ENCODE measurements at regions of chr1 and their contacts with region 1.

Region 1: GRCh38 chr1:205791568-205792180 is 16.4 kb upstream of the RAB29 start:
- DNase-seq: peak in 2 of 3 donors; percentile 72 to 85
- ATAC-seq: peak; percentile 89
- H3K4me3 ChIP-seq: no peak overlapping the region
- H3K4me1 ChIP-seq: no peaks in the 10 kb centered on the region
- CTCF ChIP-seq: peak; percentile 63

Region 2: DNA sequence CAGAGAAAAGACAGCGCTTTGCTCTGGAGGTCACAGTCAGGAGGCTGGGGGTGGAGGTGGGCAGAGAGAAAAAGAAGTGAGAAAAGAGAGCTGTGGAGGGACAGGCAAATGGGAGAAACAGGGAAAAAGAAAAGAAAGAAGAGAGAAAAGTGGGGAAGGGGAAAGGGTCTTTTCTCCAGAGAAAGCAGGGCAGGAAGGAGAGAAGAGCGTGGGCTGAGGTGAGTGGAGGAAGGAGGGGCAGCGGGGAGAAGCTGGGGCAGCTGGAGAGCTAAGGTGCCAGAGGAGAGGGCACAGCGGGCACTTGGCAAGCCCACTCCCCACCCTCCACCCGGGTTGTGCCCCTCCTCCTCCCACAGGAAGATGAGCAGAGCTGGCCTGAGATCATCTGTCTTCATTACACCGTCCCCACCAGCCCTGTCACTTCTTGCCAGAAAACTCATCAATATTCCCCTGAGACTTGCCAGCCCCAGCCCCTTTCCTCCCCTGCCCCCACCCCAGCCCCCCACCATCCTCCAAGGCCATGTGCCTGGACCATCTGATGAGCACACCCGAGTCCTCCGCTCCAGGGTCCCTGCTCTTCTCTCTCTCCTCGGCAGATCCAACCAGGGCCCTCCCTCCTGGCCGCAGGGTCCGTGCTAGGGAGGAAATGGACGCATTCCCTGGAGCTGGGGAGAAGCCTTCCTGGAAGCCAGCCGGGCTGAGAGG is 318.8 kb before region 1 on chr1:
- intact Hi-C with region 1: no loop called
- DNase-seq: no peak
- ATAC-seq: no peak
- H3K4me3 ChIP-seq: no peak overlapping the region
- H3K4me1 ChIP-seq: peaks cover 2% of the 10 kb centered on the region
- CTCF ChIP-seq: no peak

Region 3: DNA sequence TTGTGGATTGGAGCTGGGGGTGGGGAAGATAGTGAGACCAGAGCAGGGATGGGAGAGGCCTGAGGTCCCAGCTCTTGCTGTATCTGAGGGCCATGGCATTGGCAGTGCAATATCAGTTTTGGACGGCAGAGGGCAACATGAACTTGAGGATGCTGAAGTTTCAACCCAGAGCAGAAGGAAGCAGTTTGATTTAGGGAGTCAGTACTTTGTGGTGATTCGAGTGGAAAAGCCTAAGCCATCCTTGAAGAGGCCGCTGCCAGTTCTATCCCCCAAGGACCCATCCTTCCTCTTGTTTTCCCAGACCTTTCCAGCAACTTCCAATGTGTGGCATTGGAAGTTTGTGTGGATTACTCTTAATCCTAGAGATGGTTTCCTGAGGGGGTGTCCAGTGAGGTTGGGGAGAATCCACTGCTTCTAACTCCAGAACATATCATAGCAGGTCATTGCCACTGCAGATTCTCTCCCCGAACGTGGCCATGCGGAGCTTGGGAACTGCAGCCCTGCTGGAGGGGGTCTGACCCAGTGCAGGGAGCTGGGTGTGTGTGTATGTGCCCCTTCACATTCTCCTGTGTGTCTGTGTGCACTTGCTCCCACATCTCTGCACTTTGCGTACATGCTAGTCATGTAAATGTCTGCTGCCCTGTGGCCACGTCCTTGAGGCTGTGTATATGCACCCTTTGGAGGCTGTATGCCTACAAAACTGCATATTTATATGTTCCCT is 127.5 kb after region 1 on chr1:
- intact Hi-C with region 1: loop called in 1 of 2 experiments (anchors 10 kb)
- DNase-seq: peak in 2 of 3 donors; percentile 75 to 87
- ATAC-seq: peak; percentile 79
- H3K4me3 ChIP-seq: no peak overlapping the region
- H3K4me1 ChIP-seq: no peaks in the 10 kb centered on the region
- CTCF ChIP-seq: peak; percentile 82

Region 4: DNA sequence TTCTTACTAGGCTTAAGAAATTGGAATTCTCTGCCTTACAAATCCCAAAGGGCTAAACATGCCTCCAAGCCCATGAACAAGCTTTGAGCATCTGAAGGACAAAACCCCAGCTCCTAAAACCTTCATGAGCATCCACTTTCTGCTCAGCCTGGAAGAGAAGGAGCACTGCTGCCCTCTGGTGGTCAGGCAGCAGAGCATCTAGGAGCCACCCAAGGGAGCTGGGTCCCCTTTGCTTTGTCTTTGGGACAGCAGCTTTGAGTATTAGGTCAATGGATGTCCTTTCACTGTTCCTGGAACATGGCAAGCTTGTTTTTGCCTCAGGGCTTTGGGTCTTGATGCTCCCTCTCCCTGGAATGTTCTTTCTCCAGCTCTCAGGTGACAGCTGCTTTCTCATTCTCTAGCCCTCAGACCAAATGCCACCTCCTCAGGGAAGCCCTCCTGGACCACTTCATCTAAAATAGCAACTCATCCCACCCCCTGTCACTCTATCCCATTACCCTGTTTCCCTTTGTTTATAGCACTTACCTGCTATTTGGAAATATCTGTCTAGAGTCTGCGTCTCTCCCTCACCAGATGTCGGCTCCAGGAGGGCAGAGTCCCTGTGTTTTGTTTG is 185.8 kb after region 1 on chr1:
- intact Hi-C with region 1: loop called (anchors 5 kb)
- DNase-seq: peak in 2 of 3 donors; percentile 65 to 77
- ATAC-seq: peak; percentile 83
- H3K4me3 ChIP-seq: no peak overlapping the region
- H3K4me1 ChIP-seq: no peaks in the 10 kb centered on the region
- CTCF ChIP-seq: peak; percentile 81

Region 5: DNA sequence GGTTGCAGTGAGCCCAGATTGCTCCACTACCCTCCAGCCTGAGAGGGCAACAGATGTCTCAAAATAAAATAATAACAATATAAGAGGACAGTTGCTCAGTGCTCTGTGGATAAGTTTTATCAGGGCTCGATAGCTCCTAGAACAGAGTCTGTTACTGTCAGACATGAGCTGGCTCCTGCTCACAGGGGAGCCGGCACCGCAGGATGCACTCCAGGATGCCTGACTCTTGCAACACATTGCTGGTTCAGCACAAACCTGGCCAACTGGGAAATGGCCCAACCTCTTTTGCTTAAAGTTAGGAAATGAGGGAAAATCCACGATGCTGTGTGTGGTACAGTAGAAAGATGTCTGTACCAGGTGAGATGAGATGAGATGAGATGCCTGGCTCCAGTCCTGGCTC is 237.8 kb after region 1 on chr1:
- intact Hi-C with region 1: no loop called
- DNase-seq: no peak
- ATAC-seq: no peak
- H3K4me3 ChIP-seq: no peak overlapping the region
- H3K4me1 ChIP-seq: no peaks in the 10 kb centered on the region
- CTCF ChIP-seq: no peak

Region 6: DNA sequence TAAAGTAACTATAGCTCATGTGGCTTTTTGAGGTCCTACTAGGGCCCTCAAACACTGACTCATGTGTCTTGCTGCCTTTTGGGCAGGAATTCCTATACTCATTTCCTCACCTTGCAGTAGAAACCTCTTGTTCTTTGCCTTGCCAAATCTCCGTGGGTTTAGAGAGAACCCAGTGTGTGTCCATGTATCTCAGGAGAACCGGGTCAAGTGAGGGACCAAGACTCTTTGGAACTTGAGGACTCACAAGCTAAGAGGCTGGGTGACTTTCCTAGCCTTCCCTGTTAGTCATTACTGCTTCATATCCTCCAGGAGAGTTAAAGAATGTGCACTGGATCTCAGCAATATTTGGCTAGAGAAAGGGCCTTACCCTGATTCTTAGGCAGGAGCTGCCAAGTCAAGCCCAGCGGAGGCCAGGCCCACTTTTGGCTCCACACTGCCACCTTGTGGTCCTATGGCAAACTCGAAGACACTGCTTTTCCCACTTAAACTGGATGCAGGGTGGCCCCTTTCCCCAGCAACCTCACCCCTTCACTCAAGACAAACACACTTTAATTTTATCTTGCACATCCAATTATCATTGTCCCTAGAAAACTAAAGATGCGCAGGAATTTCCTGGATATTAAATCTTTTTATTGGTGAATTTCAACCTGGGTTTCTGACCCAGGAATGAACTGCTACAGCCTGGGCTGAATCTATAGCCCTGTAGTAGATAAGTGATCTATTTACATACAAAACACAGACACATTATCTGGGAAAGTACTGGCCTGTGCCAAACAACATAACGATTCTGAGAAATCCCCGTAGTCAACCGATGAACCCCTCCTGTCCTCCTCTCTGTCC is 314.9 kb after region 1 on chr1:
- intact Hi-C with region 1: loop called in 1 of 2 experiments (anchors 10 kb)
- DNase-seq: peak; percentile 70 to 84 (median 80)
- ATAC-seq: peak; percentile 91
- H3K4me3 ChIP-seq: no peak overlapping the region
- H3K4me1 ChIP-seq: no peaks in the 10 kb centered on the region
- CTCF ChIP-seq: peak; percentile 78

Measured in mucosa of descending colon (tissue), 3 donors.